ENCODE measurements at regions of chrX and their contacts with region 1.

Region 1: GRCh38 chrX:119468930-119469635 is 839 bp downstream of the SLC25A5 start:
- H3K4me3 Mint-ChIP-seq: peak overlapping the region; percentile 96
- H3K27ac Mint-ChIP-seq: peak overlapping the region; percentile 100
- H3K4me1 Mint-ChIP-seq: peaks cover 5% of the 10 kb centered on the region
- H3K27me3 Mint-ChIP-seq: no peaks in the 10 kb centered on the region

Region 2: GRCh38 chrX:119343856-119344255 is 125.2 kb before region 1 on chrX:
- intact Hi-C with region 1: no loop called
- H3K4me3 Mint-ChIP-seq: no peak overlapping the region
- H3K27ac Mint-ChIP-seq: no peak overlapping the region
- H3K4me1 Mint-ChIP-seq: peaks cover 10% of the 10 kb centered on the region
- H3K27me3 Mint-ChIP-seq: peaks cover 11% of the 10 kb centered on the region

Region 3: DNA sequence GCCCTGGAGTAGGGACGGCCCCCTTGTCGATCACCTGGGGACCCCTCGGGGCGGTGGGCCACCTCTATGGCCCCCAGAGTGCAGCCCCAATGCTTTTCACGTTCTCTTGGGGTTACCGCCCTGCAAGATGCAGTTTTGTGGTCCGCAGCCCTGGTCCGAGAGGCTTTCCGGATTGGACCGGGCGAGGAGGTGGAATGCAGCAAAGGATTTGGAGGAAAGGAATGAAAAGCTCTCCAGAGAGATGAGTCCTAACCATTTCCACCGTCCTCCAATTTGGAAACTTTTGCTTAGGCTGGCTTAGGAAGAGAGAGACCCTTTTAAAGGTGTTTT is 69.3 kb before region 1 on chrX:
- intact Hi-C with region 1: loop called (anchors 5 kb)
- H3K4me3 Mint-ChIP-seq: peak overlapping the region; percentile 76
- H3K27ac Mint-ChIP-seq: peak overlapping the region; percentile 52
- H3K4me1 Mint-ChIP-seq: peaks cover 27% of the 10 kb centered on the region
- H3K27me3 Mint-ChIP-seq: no peaks in the 10 kb centered on the region

Region 4: GRCh38 chrX:119429471-119429870 is 39.6 kb before region 1 on chrX:
- intact Hi-C with region 1: no loop called
- H3K4me3 Mint-ChIP-seq: no peak overlapping the region
- H3K27ac Mint-ChIP-seq: no peak overlapping the region
- H3K4me1 Mint-ChIP-seq: peaks cover 22% of the 10 kb centered on the region
- H3K27me3 Mint-ChIP-seq: no peaks in the 10 kb centered on the region

Measured in dendritic cell treated with granulocyte-macrophage colony-stimulating factor and Interleukin-4, amounts not matched to agents 40 ng/mL and 50 ng/mL, for 4 days (primary cell).